CD8-positive, alpha-beta memory T cell (primary cell): ENCODE measurements at regions of chr13 and their contacts with region 1.

Region 1: DNA sequence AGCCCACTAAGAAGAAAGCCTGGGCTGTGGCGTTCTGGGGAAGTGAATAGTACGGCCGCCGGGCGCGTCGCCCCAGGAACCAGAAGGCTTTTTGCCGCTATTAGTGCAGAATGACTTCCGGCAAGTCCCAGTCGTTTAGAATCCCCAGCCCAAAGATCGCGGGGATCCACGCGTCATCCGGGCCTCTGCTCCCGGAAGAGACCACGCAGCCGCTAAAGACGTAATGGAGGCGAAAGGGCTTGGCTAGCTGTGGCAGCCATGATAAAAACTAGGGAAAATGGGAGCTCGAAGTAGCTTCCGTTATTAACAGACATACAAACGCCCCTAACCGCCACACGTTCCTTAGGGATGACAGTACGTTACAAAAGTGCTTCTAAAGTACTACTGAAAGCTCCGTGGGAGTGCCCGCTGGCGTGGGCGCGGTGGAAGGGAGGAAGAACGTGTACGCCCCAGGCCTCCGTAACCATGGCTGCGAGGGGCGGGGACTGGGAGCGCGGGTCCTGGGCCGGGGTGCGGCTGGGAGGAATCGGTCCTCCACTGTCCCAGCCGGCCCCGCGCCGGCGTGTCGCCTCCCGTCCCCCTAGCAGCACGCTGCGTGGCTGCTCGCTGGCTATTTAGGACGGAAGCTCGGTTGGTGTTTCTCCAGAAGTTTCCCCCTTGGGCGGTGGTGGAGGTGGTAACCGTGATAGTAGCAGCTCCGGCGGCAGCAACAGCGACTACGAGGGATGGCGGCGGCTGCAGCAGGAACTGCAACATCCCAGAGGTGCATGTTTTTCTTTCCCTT is at the start of gene SUGT1:
- DNase-seq: peak; percentile 90 to 97 (median 96)
- H3K4me3 ChIP-seq: peak within 1 kb of the TSS; percentile 82
- H3K4me3 Mint-ChIP-seq: no peak within 1 kb of the TSS
- H3K27ac ChIP-seq: peak within 1 kb of the TSS; percentile 98
- H3K27ac Mint-ChIP-seq: no peak within 1 kb of the TSS
- H3K4me1 ChIP-seq: peaks cover 43% of the 10 kb centered on the region
- H3K4me1 Mint-ChIP-seq: peaks cover 0 to 13% (median 12%) of the 10 kb centered on the region in 3 donors
- H3K27me3 ChIP-seq: no peaks in the 10 kb centered on the region
- H3K27me3 Mint-ChIP-seq: no peaks in the 10 kb centered on the region
- total RNA-seq, gene SUGT1: 66.7 to 71.1 TPM

Region 2: DNA sequence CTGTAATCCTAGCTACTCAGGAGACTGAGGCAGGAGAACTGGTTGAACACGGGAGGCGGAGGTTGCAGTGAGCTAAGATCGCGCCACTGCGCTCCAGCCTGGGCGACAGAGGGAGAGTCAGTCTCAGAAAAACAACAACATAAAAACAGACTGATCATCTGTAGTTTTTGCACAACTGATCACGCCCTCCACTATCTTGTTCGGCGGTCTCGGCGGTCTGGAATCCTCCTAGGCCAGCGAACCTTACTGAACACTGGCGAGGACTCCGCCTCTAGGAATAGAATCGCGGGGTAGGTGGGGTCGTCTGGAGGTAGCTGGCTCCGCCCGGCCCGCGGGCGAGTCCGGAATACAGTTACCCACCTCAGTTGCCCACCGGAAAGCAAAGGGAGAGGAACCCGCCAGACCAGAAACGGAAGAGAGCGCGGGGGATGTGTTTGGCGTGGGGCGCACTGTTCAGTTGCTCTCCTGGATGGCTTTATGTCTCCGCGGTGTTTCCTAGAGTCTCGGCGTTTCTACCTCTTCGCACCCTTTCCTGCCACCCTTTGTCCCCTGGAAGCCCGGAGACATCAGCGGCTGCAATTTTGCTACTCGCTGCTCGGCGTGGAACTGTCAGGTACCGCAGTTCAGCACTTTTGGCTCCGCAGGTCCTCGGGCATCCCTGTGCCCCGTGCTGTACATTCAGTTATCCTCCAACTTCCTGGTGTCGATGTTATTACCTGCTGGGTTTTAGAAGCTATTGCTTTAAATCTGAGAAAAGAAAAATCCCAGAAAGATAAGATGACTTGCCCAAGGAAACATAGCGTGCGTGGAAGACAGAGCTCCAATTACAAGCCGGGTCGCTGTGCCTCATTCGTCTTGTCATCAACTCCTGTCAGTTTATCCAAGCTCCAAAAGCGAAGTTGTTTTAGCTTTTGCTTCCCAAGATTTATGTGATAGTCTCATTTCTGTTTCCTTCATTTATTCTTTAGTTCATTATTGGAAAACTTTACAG is 35.0 kb before region 1 on chr13:
- CTCF ChIA-PET with region 1: interaction called, 38 read pairs
- POLR2A ChIA-PET with region 1: interaction called, 48 read pairs
- DNase-seq: peak; percentile 68 to 86 (median 81)
- H3K4me3 ChIP-seq: peak overlapping the region; percentile 98
- H3K4me3 Mint-ChIP-seq: peak overlapping the region; percentile 94 to 99 (median 98)
- H3K27ac ChIP-seq: peak overlapping the region; percentile 79
- H3K27ac Mint-ChIP-seq: peak overlapping the region; percentile 81 to 98 (median 96)
- H3K4me1 ChIP-seq: peaks cover 12% of the 10 kb centered on the region
- H3K4me1 Mint-ChIP-seq: peaks cover 33 to 49% (median 48%) of the 10 kb centered on the region in 3 donors
- H3K27me3 ChIP-seq: no peaks in the 10 kb centered on the region
- H3K27me3 Mint-ChIP-seq: no peaks in the 10 kb centered on the region

Region 3: DNA sequence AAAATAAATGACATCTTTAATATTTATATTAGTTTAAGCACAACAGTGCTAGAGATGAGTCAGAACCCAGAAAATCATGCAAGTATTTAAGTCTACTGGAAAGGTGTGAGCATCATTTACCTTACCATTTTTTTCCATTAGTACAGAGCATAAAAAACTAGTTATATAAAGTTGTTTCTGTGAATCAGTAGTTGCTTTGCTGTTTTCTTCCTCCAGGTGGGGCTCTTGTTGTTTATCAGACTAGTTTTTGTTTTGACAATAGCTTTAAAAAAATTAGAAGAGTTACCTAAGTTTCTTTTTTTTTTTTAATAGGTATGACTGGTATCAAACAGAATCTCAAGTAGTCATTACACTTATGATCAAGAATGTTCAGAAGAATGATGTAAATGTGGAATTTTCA is 12.9 kb after region 1 on chr13:
- CTCF ChIA-PET with region 1: interaction called, 20 read pairs
- POLR2A ChIA-PET with region 1: no interaction called
- DNase-seq: peak in 1 of 5 donors; percentile 11
- H3K4me3 ChIP-seq: no peak overlapping the region
- H3K4me3 Mint-ChIP-seq: no peak overlapping the region
- H3K27ac ChIP-seq: no peak overlapping the region
- H3K27ac Mint-ChIP-seq: peak overlapping the region in 2 of 8 donors; percentile 26 to 71
- H3K4me1 ChIP-seq: no peaks in the 10 kb centered on the region
- H3K4me1 Mint-ChIP-seq: peaks cover 0 to 22% (median 5%) of the 10 kb centered on the region in 3 donors
- H3K27me3 ChIP-seq: no peaks in the 10 kb centered on the region
- H3K27me3 Mint-ChIP-seq: no peaks in the 10 kb centered on the region

Region 4: DNA sequence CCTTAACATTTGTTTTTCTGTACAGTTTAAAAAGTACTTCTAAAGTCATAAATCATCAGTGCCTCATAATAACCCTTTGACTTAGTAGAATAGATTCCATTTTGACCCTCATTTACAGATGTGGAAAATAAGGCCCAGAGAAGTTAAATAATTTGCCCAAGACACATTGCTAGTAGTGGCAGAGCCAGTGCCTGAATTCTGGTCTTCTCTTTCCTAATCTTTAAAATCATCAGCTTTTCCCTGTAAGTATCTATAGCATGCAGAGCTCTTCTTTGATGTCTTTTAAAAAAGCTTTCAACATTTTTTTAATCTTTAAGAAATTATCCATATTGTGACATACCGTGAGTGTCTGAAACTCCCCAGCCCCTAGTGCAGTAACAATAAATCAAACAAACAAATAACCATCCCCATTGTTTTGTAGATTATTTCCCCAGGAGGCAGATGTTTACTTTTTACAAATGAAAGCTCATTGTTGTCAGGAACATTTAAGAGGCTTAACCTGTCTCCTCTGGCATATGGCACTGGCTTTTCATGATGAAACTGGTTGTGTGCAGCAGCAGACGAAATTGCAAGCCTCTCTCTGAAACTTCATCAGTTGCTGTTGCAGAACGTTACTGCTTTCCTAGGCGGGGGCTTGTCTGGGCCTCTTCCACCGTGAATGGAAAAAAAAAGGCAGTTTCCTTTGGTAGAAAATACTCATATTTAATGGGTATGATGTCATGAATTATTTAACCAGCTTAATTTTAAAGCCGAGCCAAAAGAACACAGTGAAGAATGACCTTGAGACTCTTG is 227.8 kb after region 1 on chr13:
- CTCF ChIA-PET with region 1: no interaction called
- POLR2A ChIA-PET with region 1: no interaction called
- DNase-seq: no peak
- H3K4me3 ChIP-seq: no peak overlapping the region
- H3K4me3 Mint-ChIP-seq: no peak overlapping the region
- H3K27ac ChIP-seq: no peak overlapping the region
- H3K27ac Mint-ChIP-seq: no peak overlapping the region
- H3K4me1 ChIP-seq: no peaks in the 10 kb centered on the region
- H3K4me1 Mint-ChIP-seq: no peaks in the 10 kb centered on the region
- H3K27me3 ChIP-seq: no peaks in the 10 kb centered on the region
- H3K27me3 Mint-ChIP-seq: peaks cover 9 to 41% of the 10 kb centered on the region in 2 donors